Aorta (tissue), 5 donors: ENCODE measurements at regions of chr20 and their contacts with region 1.

Region 1: DNA sequence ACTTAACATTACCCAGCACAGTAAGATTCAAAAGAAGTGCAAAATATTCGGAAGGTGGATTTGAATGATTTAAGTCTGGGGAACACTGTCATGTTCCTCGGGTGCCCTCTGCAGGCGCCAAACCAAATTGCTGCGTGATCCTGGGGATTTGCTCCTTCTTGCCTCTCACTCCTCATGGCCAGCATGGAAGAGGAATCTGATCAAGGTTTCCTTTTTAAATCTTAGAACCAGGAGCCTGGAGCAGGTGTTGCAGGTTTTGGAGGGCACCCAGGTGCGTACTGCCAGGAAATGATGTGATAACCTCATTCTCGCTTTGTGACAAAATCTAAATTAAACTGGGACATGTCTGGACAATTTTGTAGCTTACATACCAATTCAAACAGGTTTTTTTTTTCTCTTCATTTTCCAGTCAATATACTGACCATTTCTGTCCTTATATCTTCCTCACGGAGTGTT is 8.1 kb upstream of the PFDN4 start:
- DNase-seq: peak; percentile 77 to 87
- ATAC-seq: peak; percentile 82
- H3K4me3 ChIP-seq: no peak overlapping the region
- H3K27ac ChIP-seq: no peak overlapping the region
- H3K4me1 ChIP-seq: no peaks in the 10 kb centered on the region
- H3K27me3 ChIP-seq: no peaks in the 10 kb centered on the region

Region 2: GRCh38 chr20:54093423-54094267 is 106.1 kb before region 1 on chr20:
- intact Hi-C with region 1: loop called in 1 of 2 experiments (anchors 2 kb)
- DNase-seq: no peak
- ATAC-seq: no peak
- H3K4me3 ChIP-seq: no peak overlapping the region
- H3K27ac ChIP-seq: no peak overlapping the region
- H3K4me1 ChIP-seq: no peaks in the 10 kb centered on the region
- H3K27me3 ChIP-seq: no peaks in the 10 kb centered on the region

Region 3: GRCh38 chr20:54103067-54103761 is 96.5 kb before region 1 on chr20:
- intact Hi-C with region 1: loop called in 1 of 2 experiments (anchors 2 kb)
- DNase-seq: peak; percentile 82 to 85
- ATAC-seq: peak; percentile 67
- H3K4me3 ChIP-seq: no peak overlapping the region
- H3K27ac ChIP-seq: no peak overlapping the region
- H3K4me1 ChIP-seq: no peaks in the 10 kb centered on the region
- H3K27me3 ChIP-seq: no peaks in the 10 kb centered on the region

Region 4: DNA sequence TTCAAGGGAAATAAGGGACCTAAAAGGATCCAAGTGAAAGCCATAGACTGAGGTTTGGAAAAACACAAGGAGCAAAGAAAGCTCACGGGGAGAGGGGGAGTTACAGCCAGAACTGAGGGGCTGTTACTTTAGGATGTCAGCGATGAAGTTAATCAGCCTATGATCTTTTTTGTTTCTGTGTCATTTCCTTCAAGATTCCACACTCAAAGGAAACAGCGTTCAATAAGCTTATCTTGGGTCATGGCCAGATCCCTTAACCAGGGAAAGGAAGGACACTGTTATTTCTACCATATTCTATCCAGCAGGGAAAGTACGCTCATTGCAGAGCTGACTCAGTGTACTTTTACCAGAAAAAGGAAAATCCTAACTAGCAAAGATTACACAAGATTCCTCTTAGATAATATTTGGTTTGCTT is 140.9 kb after region 1 on chr20:
- intact Hi-C with region 1: no loop called
- DNase-seq: no peak
- ATAC-seq: no peak
- H3K4me3 ChIP-seq: no peak overlapping the region
- H3K27ac ChIP-seq: peak overlapping the region in 1 of 2 donors; percentile 33
- H3K4me1 ChIP-seq: peaks cover 0 to 2% of the 10 kb centered on the region in 2 donors
- H3K27me3 ChIP-seq: no peaks in the 10 kb centered on the region

Region 5: GRCh38 chr20:54431172-54431944 is 231.6 kb after region 1 on chr20:
- intact Hi-C with region 1: no loop called
- DNase-seq: no peak
- ATAC-seq: no peak
- H3K4me3 ChIP-seq: no peak overlapping the region
- H3K27ac ChIP-seq: no peak overlapping the region
- H3K4me1 ChIP-seq: no peaks in the 10 kb centered on the region
- H3K27me3 ChIP-seq: no peaks in the 10 kb centered on the region